ENCODE measurements at regions of chr3 and their contacts with region 1.

Region 1: DNA sequence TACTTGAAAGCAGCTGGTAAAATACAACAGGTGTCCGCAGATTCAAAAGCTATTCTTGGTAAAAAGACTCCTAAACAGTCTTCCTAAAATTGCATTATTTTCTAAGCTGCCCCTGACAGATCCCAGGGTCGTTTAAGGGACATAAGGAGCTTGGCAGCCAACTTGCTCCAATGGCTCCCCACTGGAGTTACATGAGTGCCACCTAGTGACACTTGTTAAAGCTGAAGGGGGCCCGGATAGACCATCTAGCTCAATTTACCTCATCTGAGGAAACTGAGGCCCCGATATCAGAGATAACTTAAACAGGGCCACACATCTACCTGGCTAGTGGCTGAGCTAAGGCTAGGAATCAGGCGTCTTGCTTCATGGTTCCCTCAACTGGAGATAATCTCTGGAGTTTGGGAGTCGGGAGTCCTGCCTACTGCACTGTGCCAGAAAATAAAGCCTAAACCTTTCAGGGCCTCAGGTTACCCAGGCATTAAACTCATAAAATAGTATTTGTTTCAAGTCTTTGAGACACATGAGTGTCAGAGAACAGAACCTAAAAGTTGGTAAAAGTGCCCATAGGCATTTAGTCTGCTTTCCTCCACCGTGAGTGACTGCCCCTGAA is 6.5 kb upstream of the TBC1D23 start:
- DNase-seq: no peak
- H3K4me3 ChIP-seq: no peak overlapping the region
- H3K27ac ChIP-seq: peak overlapping the region in 2 of 8 donors; percentile 18 to 35
- H3K4me1 ChIP-seq: peaks cover 3 to 20% (median 7%) of the 10 kb centered on the region in 6 donors
- H3K27me3 ChIP-seq: no peaks in the 10 kb centered on the region
- CTCF ChIP-seq: peak in 10 of 11 experiments; percentile 29 to 79 (median 69)
- POLR2A ChIP-seq: no peak

Region 2: DNA sequence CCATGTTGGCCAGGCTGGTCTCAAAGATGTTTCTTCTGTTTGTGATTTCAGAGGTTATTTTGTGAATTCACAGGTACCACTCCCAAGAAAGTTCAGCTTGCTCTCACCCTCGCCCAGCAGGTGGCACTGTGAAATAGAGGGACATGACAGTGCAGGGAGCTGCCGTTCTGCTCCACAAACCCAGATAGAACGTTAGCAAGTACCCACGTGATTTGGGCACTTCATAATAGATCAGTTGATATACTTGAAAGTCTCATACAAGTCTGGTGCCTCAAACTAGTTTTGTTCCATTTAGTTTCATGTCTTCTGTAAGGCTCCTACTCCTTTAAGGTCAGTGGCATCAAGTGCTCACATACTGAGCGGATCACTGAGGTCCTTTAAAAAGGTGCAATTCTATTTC is 185.4 kb before region 1 on chr3:
- intact Hi-C with region 1: loop called (anchors 5 kb)
- DNase-seq: peak; percentile 93
- H3K4me3 ChIP-seq: no peak overlapping the region
- H3K27ac ChIP-seq: peak overlapping the region in 6 of 8 donors; percentile 26 to 63 (median 46)
- H3K4me1 ChIP-seq: peaks cover 12 to 56% (median 35%) of the 10 kb centered on the region in 6 donors
- H3K27me3 ChIP-seq: no peaks in the 10 kb centered on the region
- CTCF ChIP-seq: peak; percentile 55 to 86 (median 80)
- POLR2A ChIP-seq: no peak

Measured in spleen (tissue), 13 donors.